T-cell (primary cell): ENCODE measurements at regions of chr3 and their contacts with region 1.

Region 1: DNA sequence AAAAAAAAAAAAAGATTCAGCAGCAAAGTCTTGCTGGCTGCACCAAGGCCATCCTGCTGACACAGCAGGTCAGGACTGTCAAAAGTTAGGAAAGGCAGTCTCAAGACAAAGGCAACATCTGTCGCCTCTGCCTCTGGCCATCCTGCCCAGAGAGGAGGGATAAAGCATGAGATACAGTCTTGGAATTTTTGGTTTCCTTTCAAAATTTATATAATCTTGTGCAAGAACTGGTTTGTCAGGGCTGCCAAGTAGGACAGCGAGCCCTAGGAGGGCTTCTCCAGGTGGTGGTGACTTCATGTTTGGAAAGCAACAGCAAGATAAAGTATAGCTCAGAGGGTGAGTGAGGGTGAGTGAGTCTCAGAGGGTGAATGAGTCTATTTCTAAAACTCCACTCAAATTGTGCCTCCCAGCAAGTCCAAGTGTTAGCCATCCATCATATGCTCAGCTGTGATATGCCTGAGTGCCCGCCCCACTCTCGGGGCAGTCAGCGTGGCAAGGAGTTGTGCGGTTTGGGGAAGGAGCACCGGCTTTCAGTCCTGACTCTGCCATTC is 11.9 kb upstream of the RPL32 start:
- DNase-seq: no peak
- ATAC-seq: no peak
- H3K4me3 ChIP-seq: no peak overlapping the region
- H3K4me3 Mint-ChIP-seq: no peak overlapping the region
- H3K27ac ChIP-seq: no peak overlapping the region
- H3K27ac Mint-ChIP-seq: no peak overlapping the region
- H3K4me1 ChIP-seq: no peaks in the 10 kb centered on the region
- H3K4me1 Mint-ChIP-seq: no peaks in the 10 kb centered on the region
- H3K27me3 ChIP-seq: peaks cover 0 to 22% of the 10 kb centered on the region in 2 experiments
- H3K27me3 Mint-ChIP-seq: peaks cover 3 to 24% of the 10 kb centered on the region in 2 donors

Region 2: DNA sequence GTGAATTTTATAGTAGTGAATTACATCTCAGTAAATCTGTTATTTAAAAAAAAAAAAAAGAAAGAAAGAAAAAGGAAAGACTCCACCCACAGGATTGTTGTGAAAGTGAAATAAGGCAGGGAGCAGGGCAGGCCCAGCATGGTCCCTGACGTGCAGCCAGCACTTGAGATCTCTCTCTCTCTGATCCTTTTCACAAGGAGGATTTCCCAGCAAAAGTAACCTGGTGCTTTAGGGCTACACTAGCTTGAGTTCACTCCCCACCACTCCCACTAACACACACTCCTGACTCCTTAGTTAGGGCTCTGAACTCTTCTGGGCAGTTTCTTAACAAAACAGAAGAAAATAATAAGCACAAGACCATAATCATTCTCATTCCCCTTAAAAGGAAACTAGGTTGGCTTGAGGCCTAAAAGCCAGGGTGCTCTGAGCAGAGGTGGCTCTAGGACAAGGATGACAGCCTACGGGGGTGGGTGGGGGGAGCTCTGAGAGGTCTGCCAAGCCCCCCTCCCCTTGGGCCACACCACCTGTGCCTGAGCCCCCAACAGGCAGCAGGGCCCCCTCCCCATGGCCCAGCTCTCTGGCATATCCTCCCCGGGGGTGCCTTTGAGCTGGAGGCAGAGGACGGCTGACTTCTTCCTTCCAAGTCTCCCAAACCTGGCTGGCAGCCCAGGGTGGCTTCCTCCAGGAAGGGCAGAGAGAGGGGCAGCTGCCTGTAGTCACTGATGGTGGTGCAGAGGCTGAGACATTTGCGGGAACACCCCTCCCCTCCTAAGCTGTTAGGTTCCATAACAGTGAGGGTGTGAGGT is 95.0 kb before region 1 on chr3:
- CTCF ChIA-PET with region 1: no interaction called
- POLR2A ChIA-PET with region 1: interaction called in 1 of 2 experiments, 12 read pairs
- DNase-seq: no peak
- ATAC-seq: no peak
- H3K4me3 ChIP-seq: no peak overlapping the region
- H3K4me3 Mint-ChIP-seq: no peak overlapping the region
- H3K27ac ChIP-seq: no peak overlapping the region
- H3K27ac Mint-ChIP-seq: no peak overlapping the region
- H3K4me1 ChIP-seq: no peaks in the 10 kb centered on the region
- H3K4me1 Mint-ChIP-seq: peaks cover 4 to 6% (median 5%) of the 10 kb centered on the region in 3 donors
- H3K27me3 ChIP-seq: peaks cover 0 to 14% of the 10 kb centered on the region in 2 experiments
- H3K27me3 Mint-ChIP-seq: peaks cover 13 to 23% of the 10 kb centered on the region in 2 donors

Region 3: GRCh38 chr3:13626396-13626795 is 773.1 kb after region 1 on chr3:
- CTCF ChIA-PET with region 1: no interaction called
- POLR2A ChIA-PET with region 1: no interaction called
- DNase-seq: no peak
- ATAC-seq: no peak
- H3K4me3 ChIP-seq: no peak overlapping the region
- H3K4me3 Mint-ChIP-seq: no peak overlapping the region
- H3K27ac ChIP-seq: no peak overlapping the region
- H3K27ac Mint-ChIP-seq: no peak overlapping the region
- H3K4me1 ChIP-seq: peaks cover 0 to 7% of the 10 kb centered on the region in 2 experiments
- H3K4me1 Mint-ChIP-seq: peaks cover 0 to 7% (median 6%) of the 10 kb centered on the region in 3 donors
- H3K27me3 ChIP-seq: peaks cover 0 to 12% of the 10 kb centered on the region in 2 experiments
- H3K27me3 Mint-ChIP-seq: no peaks in the 10 kb centered on the region